ENCODE measurements at regions of chr17 and their contacts with region 1.

Region 1: DNA sequence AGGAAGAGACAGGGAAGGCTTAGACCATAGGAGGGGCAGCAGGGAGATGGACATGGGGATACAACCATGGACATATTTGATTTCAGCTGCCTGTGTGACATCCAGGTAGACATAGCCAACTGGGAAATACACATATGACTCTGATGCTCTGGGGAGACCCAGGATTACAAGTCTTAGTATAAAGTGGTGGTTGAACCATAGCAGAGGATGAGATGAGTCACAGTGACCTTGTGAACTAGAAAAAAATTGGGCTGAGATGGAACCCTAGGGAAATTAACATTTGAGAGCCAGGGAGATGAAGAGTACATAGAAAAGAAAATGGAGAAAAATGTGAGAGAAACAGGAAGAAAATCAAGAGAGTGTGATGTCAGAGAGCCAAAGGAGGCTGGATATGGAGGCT is 10.2 kb downstream of the MARCHF10 start:
- DNase-seq: no peak
- H3K4me3 ChIP-seq: no peak overlapping the region
- H3K27ac ChIP-seq: no peak overlapping the region
- H3K4me1 ChIP-seq: peaks cover 2% of the 10 kb centered on the region
- H3K27me3 ChIP-seq: no peaks in the 10 kb centered on the region
- CTCF ChIP-seq: no peak
- EP300 ChIP-seq: no peak
- POLR2A ChIP-seq: no peak

Region 2: DNA sequence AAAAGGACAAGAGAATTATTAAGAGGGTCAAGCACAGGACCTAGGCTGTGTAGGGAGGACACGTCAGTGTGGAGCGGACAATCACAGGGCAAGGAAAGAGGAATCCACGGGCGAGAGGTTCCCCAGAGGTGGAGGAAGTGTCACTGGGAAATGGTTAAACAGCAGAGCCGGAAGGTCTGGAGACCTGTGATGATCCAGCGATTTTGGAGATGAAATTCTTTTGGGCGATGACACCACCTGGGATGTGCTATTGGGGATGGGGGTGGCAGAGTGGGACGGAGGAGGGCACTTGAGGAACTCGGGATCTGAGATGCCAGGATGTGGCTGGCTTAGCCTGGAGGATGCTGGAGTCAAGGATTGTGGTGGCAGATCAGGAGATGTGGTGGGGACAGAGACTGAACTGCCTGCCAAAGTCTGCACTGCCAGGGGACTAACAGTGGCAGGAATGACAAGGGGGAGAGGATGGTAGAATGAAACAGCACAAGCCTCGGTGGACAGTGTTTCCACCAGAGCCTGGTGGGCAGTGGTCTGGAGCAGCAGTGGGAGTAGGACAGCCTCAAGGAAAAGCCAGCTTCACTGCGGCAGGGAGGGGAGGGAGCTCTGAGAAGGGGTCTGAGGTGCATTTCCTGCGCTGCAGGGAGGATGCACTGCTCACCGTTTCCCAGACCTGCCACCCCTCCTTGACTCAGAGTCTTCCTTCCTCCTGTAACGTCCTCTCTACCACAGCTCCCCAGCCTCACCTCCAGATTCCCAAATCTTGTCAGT is 23.8 kb before region 1 on chr17:
- intact Hi-C with region 1: loop called in 1 of 4 experiments (anchors 1 kb)
- DNase-seq: no peak
- H3K4me3 ChIP-seq: no peak overlapping the region
- H3K27ac ChIP-seq: no peak overlapping the region
- H3K4me1 ChIP-seq: peaks cover 2% of the 10 kb centered on the region
- H3K27me3 ChIP-seq: no peaks in the 10 kb centered on the region
- CTCF ChIP-seq: no peak
- EP300 ChIP-seq: no peak
- POLR2A ChIP-seq: no peak